ENCODE measurements at regions of chr6 and their contacts with region 1.

Region 1: DNA sequence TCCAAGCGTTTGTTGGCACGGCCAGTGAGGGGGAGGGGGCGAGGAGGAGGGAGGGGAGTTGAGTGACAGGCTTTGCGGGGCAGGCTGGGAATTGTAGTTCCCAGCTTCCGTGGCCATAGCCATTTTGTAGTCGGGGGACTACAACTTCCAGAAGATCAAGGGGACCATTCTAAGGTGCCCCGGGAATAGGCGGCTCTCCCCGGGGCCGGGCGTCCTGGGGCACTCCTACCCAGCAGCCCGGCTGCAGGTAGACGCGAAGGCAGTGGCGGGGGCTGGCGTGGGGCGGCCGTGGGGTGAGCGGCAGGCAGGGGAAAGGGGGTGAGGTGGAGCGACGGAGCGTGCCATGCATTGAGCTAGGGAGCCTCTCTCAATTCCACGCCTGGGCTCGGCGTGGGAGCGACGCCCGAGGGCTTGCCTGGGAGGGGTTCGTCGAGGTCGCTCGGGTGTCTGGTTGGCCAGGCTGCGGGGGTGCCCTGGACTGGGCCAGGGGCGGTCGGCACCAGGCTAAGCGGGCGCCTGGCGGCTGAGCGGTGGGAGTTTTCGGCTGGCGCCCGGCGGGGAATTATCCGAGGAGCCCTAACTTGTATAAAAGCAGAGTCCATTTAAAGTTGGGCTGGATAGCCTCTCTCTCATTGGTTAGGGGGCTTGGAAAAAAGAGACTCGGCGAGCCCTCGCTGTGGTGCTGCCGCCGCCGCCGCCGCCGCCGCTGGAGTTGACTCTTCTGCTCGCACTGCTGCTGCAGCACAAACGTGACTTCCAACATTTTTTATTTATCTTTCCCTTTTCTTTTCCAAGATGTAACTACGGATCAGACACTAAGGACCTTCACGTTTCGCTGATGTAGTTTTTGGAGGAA is at the start of gene JARID2:
- DNase-seq: peak; percentile 94 to 97
- H3K4me3 ChIP-seq: peak within 1 kb of the TSS; percentile 93
- H3K27ac ChIP-seq: peak within 1 kb of the TSS; percentile 73
- H3K4me1 ChIP-seq: peaks cover 35% of the 10 kb centered on the region
- H3K27me3 ChIP-seq: no peaks in the 10 kb centered on the region
- CTCF ChIP-seq: no peak
- total RNA-seq, gene JARID2: 31.1 and 35.0 TPM in 2 replicates

Region 2: GRCh38 chr6:14210663-14211561 is 1034.7 kb before region 1 on chr6:
- CTCF ChIA-PET with region 1: interaction called, 15 read pairs
- POLR2A ChIA-PET with region 1: interaction called, 3 read pairs
- intact Hi-C with region 1: loop called (anchors 2 kb)
- DNase-seq: peak; percentile 67 to 97
- H3K4me3 ChIP-seq: peak overlapping the region; percentile 96
- H3K27ac ChIP-seq: peak overlapping the region; percentile 51
- H3K4me1 ChIP-seq: peaks cover 14% of the 10 kb centered on the region
- H3K27me3 ChIP-seq: no peaks in the 10 kb centered on the region
- CTCF ChIP-seq: no peak

Region 3: GRCh38 chr6:14701946-14702345 is 543.6 kb before region 1 on chr6:
- CTCF ChIA-PET with region 1: no interaction called
- POLR2A ChIA-PET with region 1: interaction called, 20 read pairs
- intact Hi-C with region 1: no loop called
- DNase-seq: no peak
- H3K4me3 ChIP-seq: no peak overlapping the region
- H3K27ac ChIP-seq: no peak overlapping the region
- H3K4me1 ChIP-seq: peaks cover 16% of the 10 kb centered on the region
- H3K27me3 ChIP-seq: no peaks in the 10 kb centered on the region
- CTCF ChIP-seq: no peak

Region 4: GRCh38 chr6:14743465-14744211 is 502.0 kb before region 1 on chr6:
- CTCF ChIA-PET with region 1: no interaction called
- POLR2A ChIA-PET with region 1: interaction called, 5 read pairs
- intact Hi-C with region 1: loop called (anchors 1 kb)
- DNase-seq: peak; percentile 94 to 96
- H3K4me3 ChIP-seq: peak overlapping the region; percentile 32; the same call in 1 of the 2 replicates
- H3K27ac ChIP-seq: peak overlapping the region; percentile 100
- H3K4me1 ChIP-seq: peaks cover 37% of the 10 kb centered on the region
- H3K27me3 ChIP-seq: no peaks in the 10 kb centered on the region
- CTCF ChIP-seq: no peak

Region 5: DNA sequence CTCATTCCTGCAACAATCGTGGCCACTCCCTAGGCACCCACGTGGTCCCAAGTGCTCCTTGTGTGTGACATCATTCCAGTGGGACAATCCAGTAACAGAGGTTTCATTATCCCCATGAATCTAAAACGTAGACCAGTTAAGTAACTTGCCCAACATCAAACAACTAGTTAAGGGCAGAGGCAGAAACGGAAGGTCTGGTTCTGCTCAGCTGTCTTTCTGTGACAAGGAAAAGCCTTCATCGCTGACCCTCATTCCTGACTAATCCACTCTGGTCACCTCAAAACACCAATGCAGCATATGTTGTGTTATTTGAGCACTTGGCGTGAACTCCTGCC is 261.1 kb before region 1 on chr6:
- CTCF ChIA-PET with region 1: no interaction called
- POLR2A ChIA-PET with region 1: no interaction called
- intact Hi-C with region 1: loop called (anchors 5 kb)
- DNase-seq: peak in 1 of 2 experiments; percentile 6
- H3K4me3 ChIP-seq: no peak overlapping the region
- H3K27ac ChIP-seq: no peak overlapping the region
- H3K4me1 ChIP-seq: peaks cover 15% of the 10 kb centered on the region; the same call in 1 of the 2 replicates
- H3K27me3 ChIP-seq: no peaks in the 10 kb centered on the region
- CTCF ChIP-seq: no peak

Region 6: DNA sequence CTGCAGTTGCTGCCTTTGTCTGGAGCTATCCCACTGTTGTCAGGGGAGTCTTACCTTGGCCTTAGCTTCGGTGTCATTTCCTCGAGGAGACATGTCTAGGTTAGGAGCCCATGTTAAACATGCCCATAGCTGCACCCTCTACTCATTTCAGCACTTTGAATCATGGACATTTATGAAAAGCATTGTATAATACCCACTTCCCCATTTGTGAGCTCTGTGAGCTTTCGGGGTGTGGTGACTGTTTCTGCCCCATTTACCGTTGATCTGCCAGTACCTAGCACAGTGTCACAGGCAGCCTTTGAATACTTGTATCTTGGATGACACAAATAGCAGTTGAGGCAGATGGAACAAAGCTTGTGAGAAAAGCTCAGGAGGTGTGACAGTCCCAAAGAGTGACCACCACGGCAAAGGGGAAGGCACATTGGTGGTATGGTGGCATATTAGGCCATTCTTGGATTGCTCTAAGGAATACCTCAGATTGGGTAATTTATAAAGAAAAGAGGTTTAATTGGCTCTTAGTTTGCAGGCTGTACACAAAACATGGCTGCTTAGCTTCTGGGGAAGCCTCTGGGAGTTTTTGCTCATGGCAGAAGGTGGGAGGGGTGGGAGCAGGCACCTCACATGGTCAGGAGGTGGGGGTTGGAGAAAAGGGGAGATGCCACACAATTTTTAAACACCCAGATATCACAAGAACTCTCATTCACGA is 42.2 kb after region 1 on chr6:
- CTCF ChIA-PET with region 1: interaction called, 4 read pairs
- POLR2A ChIA-PET with region 1: interaction called, 9 read pairs
- intact Hi-C with region 1: loop called (anchors 2 kb)
- DNase-seq: no peak
- H3K4me3 ChIP-seq: no peak overlapping the region
- H3K27ac ChIP-seq: no peak overlapping the region
- H3K4me1 ChIP-seq: peaks cover 43% of the 10 kb centered on the region
- H3K27me3 ChIP-seq: no peaks in the 10 kb centered on the region
- CTCF ChIP-seq: no peak

Region 7: GRCh38 chr6:15491255-15491985 is 245.8 kb after region 1 on chr6:
- CTCF ChIA-PET with region 1: no interaction called
- POLR2A ChIA-PET with region 1: no interaction called
- intact Hi-C with region 1: loop called (anchors 2 kb)
- DNase-seq: peak in 1 of 2 experiments; percentile 61
- H3K4me3 ChIP-seq: no peak overlapping the region
- H3K27ac ChIP-seq: no peak overlapping the region
- H3K4me1 ChIP-seq: no peaks in the 10 kb centered on the region
- H3K27me3 ChIP-seq: no peaks in the 10 kb centered on the region
- CTCF ChIP-seq: peak; percentile 91